Dendritic cell treated with granulocyte-macrophage colony-stimulating factor and Interleukin-4, amounts not matched to agents 40 ng/mL and 50 ng/mL, for 4 days (primary cell): ENCODE measurements at regions of chr19 and their contacts with region 1.

Region 1: DNA sequence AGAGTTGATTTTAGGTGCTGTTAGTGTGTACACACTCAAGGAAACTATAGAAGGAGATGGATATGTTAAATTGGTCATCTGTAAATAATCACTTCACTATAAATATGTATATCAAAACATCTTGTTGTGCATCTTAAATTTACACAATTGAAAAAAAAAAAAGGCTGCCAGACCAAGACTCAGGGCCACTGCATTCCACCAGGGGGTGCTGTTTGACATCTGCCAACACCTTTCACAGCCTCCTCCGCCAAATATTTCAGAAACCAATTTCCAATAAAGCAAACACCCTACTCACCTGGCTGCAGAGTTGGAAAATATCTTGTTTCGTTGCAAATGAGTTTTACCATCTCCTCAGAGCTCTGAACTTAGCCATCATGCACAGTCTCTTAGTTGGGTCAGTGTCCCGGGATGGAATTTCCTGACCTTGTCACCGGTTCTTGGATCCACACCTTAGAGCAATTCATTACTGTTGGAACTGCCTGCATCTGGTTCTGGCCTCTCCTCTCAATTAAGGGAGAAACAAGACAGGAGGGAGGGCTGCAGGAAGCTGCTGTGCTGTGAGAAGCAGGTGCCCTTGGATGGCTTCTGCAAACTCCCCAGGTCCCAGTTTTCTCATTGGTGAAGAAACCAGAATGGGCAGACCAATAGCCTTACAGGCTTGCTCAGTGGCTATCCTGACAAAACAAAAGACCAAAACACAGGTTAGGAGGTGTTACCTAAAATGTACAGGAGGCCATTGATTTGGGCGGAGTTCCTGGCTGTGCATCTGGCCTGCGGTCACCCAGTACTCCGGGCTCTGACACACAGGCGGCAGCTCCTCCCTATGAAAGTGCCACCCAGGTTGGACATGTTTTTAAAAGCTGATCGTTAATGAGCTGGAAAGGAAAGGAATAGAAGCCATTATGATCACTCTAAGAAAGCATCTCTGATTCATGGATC is 746.6 kb downstream of the UQCRFS1 start:
- H3K4me3 Mint-ChIP-seq: no peak overlapping the region
- H3K27ac Mint-ChIP-seq: no peak overlapping the region
- H3K4me1 Mint-ChIP-seq: peaks cover 50% of the 10 kb centered on the region
- H3K27me3 Mint-ChIP-seq: peaks cover 9% of the 10 kb centered on the region

Region 2: DNA sequence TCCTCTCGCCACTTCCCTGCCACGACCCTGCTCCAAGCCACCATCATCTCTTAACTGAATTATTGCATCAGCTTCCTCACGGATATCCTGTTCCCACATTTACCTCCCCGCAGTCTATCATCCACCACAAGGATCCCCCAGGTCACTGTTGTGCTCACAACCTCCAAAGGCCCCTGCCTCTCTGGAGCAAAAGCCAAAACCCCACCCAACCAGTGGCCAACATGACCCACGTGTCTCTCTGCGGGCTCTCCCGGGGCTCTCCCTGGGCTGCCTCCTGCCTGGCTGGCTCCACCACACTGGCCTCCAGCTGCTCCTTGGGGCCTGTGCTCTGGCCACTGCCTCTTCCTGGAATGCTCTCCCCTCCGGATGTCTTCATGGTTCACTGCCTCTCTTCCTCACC is 62.7 kb before region 1 on chr19:
- intact Hi-C with region 1: no loop called
- H3K4me3 Mint-ChIP-seq: no peak overlapping the region
- H3K27ac Mint-ChIP-seq: no peak overlapping the region
- H3K4me1 Mint-ChIP-seq: peaks cover 41% of the 10 kb centered on the region
- H3K27me3 Mint-ChIP-seq: peaks cover 23% of the 10 kb centered on the region

Region 3: DNA sequence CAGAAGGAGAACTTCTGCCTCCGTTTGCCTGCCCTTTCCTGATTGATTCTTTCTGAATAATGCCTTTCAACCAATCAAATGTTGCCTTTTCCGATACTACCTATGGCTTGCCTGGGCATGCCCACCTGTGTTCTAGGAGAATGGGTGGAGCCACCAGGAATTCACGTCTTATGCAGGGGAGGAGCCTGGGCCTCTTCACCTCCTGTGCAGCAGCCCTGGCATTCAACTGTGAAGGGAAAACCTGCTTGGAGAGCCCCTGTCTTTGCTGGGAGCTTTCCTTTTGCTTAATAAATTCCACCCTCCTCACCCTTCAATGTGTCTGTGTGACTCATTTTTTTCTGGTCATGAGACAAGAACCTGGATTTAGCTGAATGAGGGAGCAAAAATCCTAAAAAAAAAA is 15.8 kb after region 1 on chr19:
- intact Hi-C with region 1: no loop called
- H3K4me3 Mint-ChIP-seq: no peak overlapping the region
- H3K27ac Mint-ChIP-seq: peak overlapping the region; percentile 42
- H3K4me1 Mint-ChIP-seq: peaks cover 74% of the 10 kb centered on the region
- H3K27me3 Mint-ChIP-seq: peaks cover 8% of the 10 kb centered on the region

Region 4: GRCh38 chr19:28504139-28504538 is 37.8 kb after region 1 on chr19:
- intact Hi-C with region 1: loop called (anchors 5 kb)
- H3K4me3 Mint-ChIP-seq: no peak overlapping the region
- H3K27ac Mint-ChIP-seq: peak overlapping the region; percentile 70
- H3K4me1 Mint-ChIP-seq: peaks cover 81% of the 10 kb centered on the region
- H3K27me3 Mint-ChIP-seq: peaks cover 2% of the 10 kb centered on the region

Region 5: DNA sequence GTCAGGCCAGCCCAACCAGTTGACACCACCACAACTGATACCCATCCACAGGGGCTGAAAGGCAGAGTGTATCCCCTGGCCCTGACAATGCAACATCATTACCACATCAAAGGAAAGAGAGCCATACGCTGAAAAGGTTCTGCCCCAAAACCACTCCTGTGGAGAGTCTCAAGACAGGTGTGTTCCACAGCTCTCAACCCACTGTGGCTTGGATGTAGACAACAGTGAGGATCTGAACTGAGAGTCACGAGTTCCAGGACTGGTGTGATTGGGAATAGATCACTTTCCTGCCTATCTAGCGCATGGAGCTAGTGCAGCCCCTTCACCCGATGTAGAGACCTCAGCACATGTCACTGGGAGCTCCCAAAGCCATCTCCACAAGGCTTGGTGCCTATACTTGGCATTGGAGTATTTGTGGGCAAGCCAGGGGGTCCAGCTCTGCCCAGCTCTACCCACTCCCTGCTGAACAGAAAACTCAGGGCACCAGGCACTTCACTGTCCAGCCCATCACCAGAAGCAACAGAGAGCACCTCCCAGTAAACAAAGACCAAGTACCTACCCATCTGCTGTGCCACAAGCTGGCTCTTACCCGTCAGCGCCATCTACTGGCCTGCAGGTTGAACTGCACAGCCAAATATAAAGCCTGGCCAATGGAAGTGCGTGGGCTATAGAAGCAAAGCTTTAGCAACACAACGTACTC is 167.1 kb after region 1 on chr19:
- intact Hi-C with region 1: loop called (anchors 1 kb)
- H3K4me3 Mint-ChIP-seq: no peak overlapping the region
- H3K27ac Mint-ChIP-seq: no peak overlapping the region
- H3K4me1 Mint-ChIP-seq: no peaks in the 10 kb centered on the region
- H3K27me3 Mint-ChIP-seq: peaks cover 6% of the 10 kb centered on the region